Activated CD4-positive, alpha-beta memory T cell treated with anti-CD3 and anti-CD28 coated beads for 36 hours (primary cell): ENCODE measurements at regions of chr9 and their contacts with region 1.

Region 1: GRCh38 chr9:114155263-114155972 is at the start of gene COL27A1:
- DNase-seq: peak; percentile 88
- H3K4me3 Mint-ChIP-seq: peak within 1 kb of the TSS; percentile 81
- H3K27ac Mint-ChIP-seq: peak within 1 kb of the TSS; percentile 50
- H3K4me1 Mint-ChIP-seq: peaks cover 18% of the 10 kb centered on the region
- H3K27me3 Mint-ChIP-seq: peaks cover 31% of the 10 kb centered on the region
- total RNA-seq, gene COL27A1: 4.0 to 4.1 TPM

Region 2: DNA sequence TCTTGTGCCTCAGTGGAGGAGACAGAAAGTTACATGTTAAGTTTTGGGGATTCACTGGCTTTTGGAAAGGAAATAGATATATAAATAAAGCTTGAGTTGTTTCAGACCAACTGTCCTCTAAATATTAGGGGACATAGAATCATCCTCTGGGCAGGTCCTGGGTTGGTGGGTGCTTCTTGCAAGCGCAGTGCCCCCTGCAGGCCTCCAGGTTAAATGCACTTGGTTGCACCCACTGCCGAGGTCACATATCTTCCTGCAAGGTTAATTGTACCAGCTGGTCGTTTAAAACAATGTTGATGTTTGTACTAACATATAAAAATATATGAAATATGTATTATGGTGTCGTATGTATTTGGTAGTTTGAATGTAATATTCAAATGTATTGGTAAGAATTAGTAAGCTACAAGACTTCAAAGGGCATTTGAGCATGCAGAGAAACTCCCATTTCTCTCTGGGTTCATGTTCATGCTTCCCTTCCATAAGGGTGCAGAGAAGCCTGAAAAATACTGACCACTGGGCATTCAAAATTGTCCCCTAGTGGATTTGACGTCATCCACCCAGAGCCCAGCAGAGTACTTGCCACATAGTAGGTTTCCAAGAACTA is 192.3 kb before region 1 on chr9:
- CTCF ChIA-PET with region 1: no interaction called
- POLR2A ChIA-PET with region 1: no interaction called
- intact Hi-C with region 1: no loop called
- DNase-seq: peak; percentile 60
- H3K4me3 Mint-ChIP-seq: no peak overlapping the region
- H3K27ac Mint-ChIP-seq: no peak overlapping the region
- H3K4me1 Mint-ChIP-seq: no peaks in the 10 kb centered on the region
- H3K27me3 Mint-ChIP-seq: no peaks in the 10 kb centered on the region

Region 3: GRCh38 chr9:114291064-114291474 is 135.7 kb after region 1 on chr9:
- CTCF ChIA-PET with region 1: interaction called, 49 read pairs
- POLR2A ChIA-PET with region 1: no interaction called
- intact Hi-C with region 1: loop called (anchors 1 kb)
- DNase-seq: peak; percentile 81
- H3K4me3 Mint-ChIP-seq: no peak overlapping the region
- H3K27ac Mint-ChIP-seq: no peak overlapping the region
- H3K4me1 Mint-ChIP-seq: peaks cover 2% of the 10 kb centered on the region
- H3K27me3 Mint-ChIP-seq: peaks cover 3% of the 10 kb centered on the region

Region 4: DNA sequence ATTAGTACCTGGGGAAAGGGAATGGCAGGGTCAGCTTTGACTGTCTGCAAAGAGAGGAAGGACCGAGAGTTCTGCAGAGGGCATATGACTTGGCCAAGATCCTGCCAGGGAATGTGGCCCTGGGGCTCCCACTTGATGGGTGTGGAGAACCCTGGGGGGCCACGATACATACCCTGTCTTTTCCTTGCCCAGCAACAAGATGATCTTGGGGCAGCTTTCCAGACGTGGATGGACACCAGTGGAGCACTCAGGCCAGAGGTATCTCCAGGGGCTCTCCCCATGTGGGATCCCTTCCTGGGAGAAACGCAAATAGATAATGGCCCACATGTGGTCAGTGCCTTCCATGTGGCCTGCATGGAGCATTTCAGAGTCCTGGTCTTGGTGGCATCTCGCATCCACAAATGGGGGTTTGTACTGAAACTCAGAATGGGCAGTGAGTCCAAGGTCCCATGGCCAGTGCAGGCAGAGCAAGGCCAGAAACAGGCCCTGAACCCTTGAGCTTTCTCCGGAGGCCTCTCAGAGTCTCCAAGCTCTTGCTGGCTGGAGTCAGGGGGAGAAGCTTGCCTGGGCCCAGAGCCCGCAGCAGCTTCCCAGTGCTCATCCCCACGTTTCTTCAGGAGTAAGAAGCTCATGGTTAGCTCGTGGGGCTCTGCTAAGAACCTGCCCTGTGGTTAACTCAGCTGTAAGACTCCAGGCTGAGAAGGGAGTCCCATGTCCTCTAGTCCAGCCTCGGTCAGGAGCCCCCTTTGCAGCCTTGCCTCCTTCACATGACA is 149.2 kb after region 1 on chr9:
- CTCF ChIA-PET with region 1: no interaction called
- POLR2A ChIA-PET with region 1: no interaction called
- intact Hi-C with region 1: loop called (anchors 1 kb)
- DNase-seq: peak; percentile 4
- H3K4me3 Mint-ChIP-seq: no peak overlapping the region
- H3K27ac Mint-ChIP-seq: no peak overlapping the region
- H3K4me1 Mint-ChIP-seq: peaks cover 4% of the 10 kb centered on the region
- H3K27me3 Mint-ChIP-seq: no peaks in the 10 kb centered on the region